ENCODE measurements at regions of chr22 and their contacts with region 1.

Region 1: DNA sequence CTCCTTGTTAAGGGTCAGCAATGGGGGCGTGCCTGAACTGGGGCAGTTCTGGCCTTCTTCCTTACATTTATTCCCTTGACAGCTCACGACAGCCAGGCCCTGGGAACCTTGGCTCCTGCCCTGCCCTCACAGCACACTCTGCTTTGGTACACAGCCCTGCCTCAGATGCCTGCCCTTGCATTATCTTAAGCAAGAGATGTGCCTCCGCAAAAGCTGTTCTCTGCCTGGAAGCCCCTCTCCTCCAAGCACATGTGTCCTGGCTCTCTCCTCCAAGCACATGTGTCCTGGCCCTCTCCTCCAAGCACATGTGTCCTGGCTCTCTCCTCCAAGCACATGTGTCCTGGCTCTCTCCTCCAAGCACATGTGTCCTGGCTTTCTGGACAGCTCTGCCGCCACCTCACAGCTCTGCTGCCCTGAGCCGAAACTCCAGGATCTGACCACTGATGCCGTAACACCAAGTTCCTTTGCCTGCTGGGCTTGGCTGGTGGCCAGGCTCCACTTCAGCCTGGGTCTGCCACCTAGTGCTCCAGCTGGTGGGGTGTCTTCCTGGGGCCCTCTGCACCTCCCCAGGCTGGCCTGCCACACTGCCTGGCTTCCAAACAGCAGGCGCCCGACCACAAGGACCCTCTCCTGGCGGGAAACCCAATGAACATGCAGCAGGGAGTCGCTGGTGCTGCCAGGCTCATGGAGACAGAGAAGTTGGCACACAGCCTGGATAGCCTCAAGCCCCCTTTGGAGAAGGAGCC is 53.0 kb downstream of the SCUBE1 start:
- DNase-seq: no peak

Region 2: GRCh38 chr22:43236411-43237166 is 53.6 kb before region 1 on chr22:
- intact Hi-C with region 1: loop called in 1 of 2 experiments (anchors 5 kb)
- DNase-seq: no peak

Region 3: GRCh38 chr22:43337385-43337784 is 47.2 kb after region 1 on chr22:
- intact Hi-C with region 1: loop called in 1 of 2 experiments (anchors 1 kb)
- DNase-seq: no peak

Measured in posterior vena cava (tissue), 2 donors.